HAP-1 (cell line): ENCODE measurements at regions of chr19 and their contacts with region 1.

Region 1: GRCh38 chr19:8252922-8253589 is 43.9 kb downstream of the CERS4 start:
- DNase-seq: peak; percentile 81 to 92
- H3K4me3 ChIP-seq: no peak overlapping the region
- H3K4me1 ChIP-seq: no peaks in the 10 kb centered on the region
- H3K27me3 ChIP-seq: no peaks in the 10 kb centered on the region

Region 2: GRCh38 chr19:7943444-7944176 is 309.4 kb before region 1 on chr19 and contains the start of gene TIMM44:
- in situ Hi-C with region 1: loop called (anchors 10 kb)
- DNase-seq: peak; percentile 99 to 100
- H3K4me3 ChIP-seq: peak within 1 kb of the TSS; percentile 92
- H3K4me1 ChIP-seq: peaks cover 8% of the 10 kb centered on the region
- H3K27me3 ChIP-seq: no peaks in the 10 kb centered on the region

Region 3: DNA sequence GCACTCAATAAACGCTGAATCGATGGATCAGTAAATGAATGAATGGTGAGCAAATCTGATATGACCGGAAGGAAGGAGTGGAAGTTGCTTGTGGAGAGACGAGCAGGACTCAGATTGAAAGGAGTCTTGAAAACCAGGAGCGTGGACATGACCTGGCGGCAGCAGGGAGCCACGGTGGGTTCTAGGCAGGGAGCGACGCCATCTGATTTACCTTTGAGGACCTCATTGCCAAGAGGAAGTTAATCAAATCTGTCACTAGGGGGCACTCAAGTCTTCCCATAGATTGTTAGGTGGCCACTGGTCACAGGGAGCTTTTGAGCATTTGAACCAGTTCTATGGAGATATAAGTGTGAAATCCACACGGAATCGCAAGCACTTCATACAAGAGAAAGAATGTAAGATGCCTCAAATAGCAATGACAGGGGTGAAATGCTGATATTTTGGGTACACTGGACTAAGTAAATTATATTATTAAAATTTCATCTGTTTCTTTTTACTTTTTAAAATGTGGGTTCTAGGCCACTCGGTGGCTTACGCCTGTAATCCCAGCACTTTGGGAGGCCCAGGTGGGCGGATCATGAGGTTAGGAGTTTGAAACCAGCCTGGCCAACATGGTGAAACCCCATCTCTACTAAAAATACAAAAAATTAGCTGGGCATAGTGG is 94.5 kb before region 1 on chr19:
- in situ Hi-C with region 1: loop called (anchors 5 kb)
- DNase-seq: peak; percentile 65 to 73
- H3K4me3 ChIP-seq: no peak overlapping the region
- H3K4me1 ChIP-seq: peaks cover 16% of the 10 kb centered on the region
- H3K27me3 ChIP-seq: no peaks in the 10 kb centered on the region